ENCODE measurements at regions of chr16 and their contacts with region 1.

Region 1: GRCh38 chr16:4330277-4330874 is 14.5 kb downstream of the GLIS2 start:
- DNase-seq: peak; percentile 66
- ATAC-seq: peak; percentile 93
- H3K4me3 ChIP-seq: no peak overlapping the region
- H3K27ac ChIP-seq: no peak overlapping the region
- H3K4me1 ChIP-seq: no peaks in the 10 kb centered on the region
- H3K27me3 ChIP-seq: no peaks in the 10 kb centered on the region
- CTCF ChIP-seq: peak; percentile 83

Region 2: DNA sequence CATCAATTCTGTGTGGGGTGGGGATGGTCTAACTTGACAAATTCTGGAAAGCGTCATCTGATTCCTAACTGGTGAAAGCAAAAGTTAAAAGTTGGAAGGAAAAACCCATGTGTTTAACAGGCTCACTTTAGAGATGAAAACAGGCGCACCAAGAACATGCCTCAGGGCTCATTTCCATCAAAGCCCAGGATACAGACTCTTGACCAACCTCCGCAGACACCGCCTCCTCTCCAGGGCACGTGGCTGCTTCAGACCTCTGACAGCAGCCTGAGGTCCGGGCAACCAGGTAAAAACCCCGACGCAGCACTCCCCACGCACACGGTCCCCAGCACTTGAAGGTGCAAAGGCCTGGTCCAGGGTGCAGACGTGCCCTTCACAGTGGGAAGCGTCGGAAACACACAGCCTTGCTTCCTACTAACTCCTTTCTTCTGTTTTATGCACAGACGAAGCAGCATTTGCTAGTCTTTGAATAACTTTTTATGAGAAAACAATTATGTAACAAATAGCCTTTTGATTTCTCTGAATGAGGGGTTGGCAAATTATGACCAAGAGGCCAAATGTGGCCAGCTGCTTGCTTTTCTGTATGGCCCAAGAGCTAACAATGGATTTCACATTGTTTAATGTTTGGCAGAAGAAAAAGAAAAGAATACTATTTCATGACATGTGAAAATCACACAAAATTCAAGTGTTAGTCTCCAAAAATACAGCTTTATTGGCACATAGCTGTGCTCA is 568.8 kb before region 1 on chr16:
- CTCF ChIA-PET with region 1: interaction called, 10 read pairs
- POLR2A ChIA-PET with region 1: no interaction called
- intact Hi-C with region 1: no loop called
- DNase-seq: no peak
- ATAC-seq: no peak
- H3K4me3 ChIP-seq: no peak overlapping the region
- H3K27ac ChIP-seq: no peak overlapping the region
- H3K4me1 ChIP-seq: no peaks in the 10 kb centered on the region
- H3K27me3 ChIP-seq: no peaks in the 10 kb centered on the region
- CTCF ChIP-seq: no peak

Region 3: GRCh38 chr16:4288148-4288921 is 42.0 kb before region 1 on chr16:
- CTCF ChIA-PET with region 1: interaction called, 9 read pairs
- POLR2A ChIA-PET with region 1: no interaction called
- intact Hi-C with region 1: loop called (anchors 1 kb)
- DNase-seq: peak; percentile 73
- ATAC-seq: peak; percentile 65
- H3K4me3 ChIP-seq: peak overlapping the region; percentile 42; the same call in 1 of the 2 replicates
- H3K27ac ChIP-seq: no peak overlapping the region
- H3K4me1 ChIP-seq: peaks cover 25% of the 10 kb centered on the region
- H3K27me3 ChIP-seq: no peaks in the 10 kb centered on the region
- CTCF ChIP-seq: peak; percentile 88